Sigmoid colon (tissue), 7 donors: ENCODE measurements at regions of chrX and their contacts with region 1.

Region 1: GRCh38 chrX:69285881-69286564 is 120.8 kb upstream of the PJA1 start:
- DNase-seq: peak; percentile 85
- H3K4me3 ChIP-seq: peak overlapping the region; percentile 13 to 50 (median 45)
- H3K27ac ChIP-seq: peak overlapping the region; percentile 57 to 73 (median 68)
- H3K4me1 ChIP-seq: peaks cover 0 to 22% (median 15%) of the 10 kb centered on the region in 4 donors
- H3K27me3 ChIP-seq: peaks cover 0 to 2% (median 0%) of the 10 kb centered on the region in 3 donors
- CTCF ChIP-seq: peak; percentile 74 to 86 (median 82)
- EP300 ChIP-seq: no peak
- POLR2A ChIP-seq: no peak

Region 2: GRCh38 chrX:68732906-68733493 is 553.0 kb before region 1 on chrX:
- intact Hi-C with region 1: loop called (anchors 2 kb)
- DNase-seq: peak; percentile 78
- H3K4me3 ChIP-seq: no peak overlapping the region
- H3K27ac ChIP-seq: no peak overlapping the region
- H3K4me1 ChIP-seq: no peaks in the 10 kb centered on the region
- H3K27me3 ChIP-seq: no peaks in the 10 kb centered on the region
- CTCF ChIP-seq: peak; percentile 13 to 68 (median 38)
- EP300 ChIP-seq: no peak
- POLR2A ChIP-seq: no peak

Region 3: GRCh38 chrX:69093960-69094871 is 191.8 kb before region 1 on chrX:
- intact Hi-C with region 1: loop called (anchors 2 kb)
- DNase-seq: peak; percentile 74
- H3K4me3 ChIP-seq: no peak overlapping the region
- H3K27ac ChIP-seq: no peak overlapping the region
- H3K4me1 ChIP-seq: no peaks in the 10 kb centered on the region
- H3K27me3 ChIP-seq: no peaks in the 10 kb centered on the region
- CTCF ChIP-seq: peak in 2 of 4 experiments; percentile 40 to 49
- EP300 ChIP-seq: no peak
- POLR2A ChIP-seq: no peak

Region 4: DNA sequence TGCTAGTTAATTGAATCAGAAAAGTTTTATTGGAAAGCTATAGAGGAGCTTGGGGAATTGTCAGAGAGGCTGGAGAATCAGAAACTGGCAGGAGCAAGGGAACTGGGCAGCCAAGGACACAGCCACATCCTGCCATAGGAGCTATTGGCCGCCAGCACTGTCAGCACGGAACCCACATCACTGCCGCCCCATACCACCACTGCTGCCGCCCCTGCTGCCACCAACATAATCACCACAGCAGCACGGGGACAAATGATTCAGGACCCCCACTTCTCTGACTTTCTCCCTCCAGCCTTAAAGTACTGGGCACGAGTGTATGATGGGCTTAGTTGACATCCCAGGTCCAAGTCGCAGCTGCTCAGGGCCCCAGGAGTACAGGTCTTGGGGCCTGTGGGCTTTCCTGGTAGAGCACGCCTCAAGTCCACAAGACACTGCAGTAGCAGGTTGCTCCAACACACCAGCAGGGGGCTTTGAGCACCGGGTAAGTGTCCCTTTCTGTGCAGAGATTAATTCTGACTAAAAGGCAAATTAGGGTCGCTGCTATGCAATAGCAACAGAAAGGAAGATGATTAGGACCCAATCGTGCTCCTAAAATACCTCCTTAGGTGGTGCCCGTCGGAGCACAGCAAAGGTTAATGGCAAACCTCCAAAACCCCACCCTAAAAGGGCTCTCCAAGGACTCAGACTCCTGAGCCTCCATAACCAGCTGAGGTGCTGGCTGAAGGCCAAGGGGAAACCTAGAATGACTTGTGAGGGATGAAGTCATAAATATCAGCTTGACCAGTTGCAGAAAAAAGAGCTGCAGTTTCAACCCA is 127.7 kb before region 1 on chrX:
- intact Hi-C with region 1: loop called (anchors 2 kb)
- DNase-seq: peak; percentile 85
- H3K4me3 ChIP-seq: no peak overlapping the region
- H3K27ac ChIP-seq: peak overlapping the region in 3 of 4 donors; percentile 22 to 34 (median 30)
- H3K4me1 ChIP-seq: peaks cover 0 to 18% (median 11%) of the 10 kb centered on the region in 4 donors
- H3K27me3 ChIP-seq: no peaks in the 10 kb centered on the region
- CTCF ChIP-seq: peak; percentile 18 to 51 (median 32)
- EP300 ChIP-seq: no peak
- POLR2A ChIP-seq: no peak

Region 5: GRCh38 chrX:69165087-69165651 is 120.9 kb before region 1 on chrX and contains the start of gene PJA1:
- intact Hi-C with region 1: loop called (anchors 2 kb)
- DNase-seq: peak; percentile 87
- H3K4me3 ChIP-seq: peak within 1 kb of the TSS; percentile 64 to 70 (median 68)
- H3K27ac ChIP-seq: peak within 1 kb of the TSS; percentile 80 to 83 (median 82)
- H3K4me1 ChIP-seq: peaks cover 0 to 11% (median 2%) of the 10 kb centered on the region in 4 donors
- H3K27me3 ChIP-seq: no peaks in the 10 kb centered on the region
- CTCF ChIP-seq: no peak
- EP300 ChIP-seq: no peak
- POLR2A ChIP-seq: peak; percentile 55 to 65
- total RNA-seq, gene PJA1: 17.0 to 21.8 (median 19.1) TPM